Activated CD4-positive, alpha-beta T cell treated with anti-CD3 and anti-CD28 coated beads for 36 hours (primary cell): ENCODE measurements at regions of chr5 and their contacts with region 1.

Region 1: GRCh38 chr5:173972925-173973615 is 15.9 kb upstream of the C5orf47 start:
- DNase-seq: peak; percentile 87
- ATAC-seq: peak; percentile 84
- H3K4me3 Mint-ChIP-seq: peak overlapping the region; percentile 70
- H3K27ac Mint-ChIP-seq: peak overlapping the region; percentile 29
- H3K4me1 Mint-ChIP-seq: peaks cover 8% of the 10 kb centered on the region
- H3K27me3 Mint-ChIP-seq: peaks cover 5% of the 10 kb centered on the region

Region 2: DNA sequence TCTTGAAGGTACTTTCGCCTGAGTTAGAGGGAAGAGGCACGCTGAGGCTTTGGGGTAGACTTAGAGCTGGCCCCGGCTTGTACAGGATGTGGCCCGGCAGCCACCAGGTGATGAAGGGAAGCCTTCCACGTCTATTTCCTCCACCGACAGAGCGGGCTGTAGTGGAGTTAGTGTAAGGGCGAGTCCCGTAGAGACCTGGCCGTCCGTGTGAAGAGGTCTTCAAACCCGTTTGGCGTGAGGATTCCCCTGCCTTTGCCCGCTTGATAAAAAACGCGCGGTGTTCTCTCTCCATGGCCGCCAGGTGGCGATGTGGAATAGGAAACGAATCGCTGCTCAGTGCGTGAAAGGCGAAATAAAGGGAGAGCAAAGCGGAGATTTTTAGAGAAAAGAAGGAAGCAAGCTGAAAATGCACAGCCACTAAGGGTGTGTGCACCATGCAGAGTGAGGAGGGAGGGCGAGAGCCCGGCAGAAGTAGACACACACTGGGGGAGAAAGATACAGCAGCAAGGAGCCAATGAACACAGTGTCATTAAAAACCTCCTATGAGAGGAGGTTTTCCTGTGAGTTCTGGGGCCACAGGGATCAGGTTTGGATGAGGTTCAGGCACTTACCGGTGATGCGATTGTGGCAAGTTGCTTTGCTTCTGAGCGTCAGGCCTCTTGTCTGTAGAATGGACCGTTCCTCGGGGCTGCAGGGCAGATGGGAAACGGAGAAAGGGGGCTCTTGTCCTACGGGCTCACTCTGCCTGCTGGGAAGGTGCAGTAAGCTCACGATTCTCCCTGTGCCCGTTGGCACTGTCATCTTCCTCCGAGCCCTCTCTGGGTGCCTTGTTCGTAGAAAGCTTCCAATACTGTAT is 679.0 kb before region 1 on chr5:
- CTCF ChIA-PET with region 1: no interaction called
- POLR2A ChIA-PET with region 1: no interaction called
- intact Hi-C with region 1: loop called in 1 of 2 experiments (anchors 1 kb)
- DNase-seq: peak; percentile 87
- ATAC-seq: peak; percentile 85
- H3K4me3 Mint-ChIP-seq: peak overlapping the region; percentile 16
- H3K27ac Mint-ChIP-seq: no peak overlapping the region
- H3K4me1 Mint-ChIP-seq: peaks cover 12% of the 10 kb centered on the region
- H3K27me3 Mint-ChIP-seq: peaks cover 32% of the 10 kb centered on the region

Region 3: DNA sequence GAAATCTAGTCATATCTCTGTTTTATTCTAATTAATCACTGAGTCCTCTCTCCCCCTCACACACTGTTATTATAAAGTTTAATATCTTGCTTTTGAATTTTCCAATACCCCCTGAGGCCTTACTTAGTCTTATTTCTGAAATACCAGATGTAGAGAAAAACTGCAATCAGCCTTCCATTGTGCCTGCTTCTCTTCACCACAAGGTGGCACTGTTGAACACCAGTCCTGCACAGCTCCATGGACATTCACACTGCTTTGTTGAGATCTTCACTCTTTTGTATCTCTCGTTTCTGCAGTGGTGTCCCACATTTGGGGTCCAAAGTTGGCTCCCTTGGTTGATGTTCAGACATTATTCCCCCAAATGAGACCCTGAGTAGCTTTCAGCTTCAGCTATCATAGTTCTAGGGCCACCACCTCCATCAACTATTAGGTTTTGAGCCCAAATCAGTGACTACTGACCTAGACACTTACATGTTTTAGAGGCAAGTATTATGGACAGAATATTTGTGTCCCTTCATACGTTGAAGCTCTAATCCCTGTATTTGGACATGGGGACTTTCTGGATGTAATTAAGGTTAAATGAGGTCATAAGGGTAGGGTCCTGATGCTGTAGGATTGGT is 380.9 kb before region 1 on chr5:
- CTCF ChIA-PET with region 1: interaction called, 10 read pairs
- POLR2A ChIA-PET with region 1: no interaction called
- intact Hi-C with region 1: loop called in 1 of 2 experiments (anchors 1 kb)
- DNase-seq: peak; percentile 41
- ATAC-seq: no peak
- H3K4me3 Mint-ChIP-seq: no peak overlapping the region
- H3K27ac Mint-ChIP-seq: no peak overlapping the region
- H3K4me1 Mint-ChIP-seq: no peaks in the 10 kb centered on the region
- H3K27me3 Mint-ChIP-seq: no peaks in the 10 kb centered on the region

Region 4: DNA sequence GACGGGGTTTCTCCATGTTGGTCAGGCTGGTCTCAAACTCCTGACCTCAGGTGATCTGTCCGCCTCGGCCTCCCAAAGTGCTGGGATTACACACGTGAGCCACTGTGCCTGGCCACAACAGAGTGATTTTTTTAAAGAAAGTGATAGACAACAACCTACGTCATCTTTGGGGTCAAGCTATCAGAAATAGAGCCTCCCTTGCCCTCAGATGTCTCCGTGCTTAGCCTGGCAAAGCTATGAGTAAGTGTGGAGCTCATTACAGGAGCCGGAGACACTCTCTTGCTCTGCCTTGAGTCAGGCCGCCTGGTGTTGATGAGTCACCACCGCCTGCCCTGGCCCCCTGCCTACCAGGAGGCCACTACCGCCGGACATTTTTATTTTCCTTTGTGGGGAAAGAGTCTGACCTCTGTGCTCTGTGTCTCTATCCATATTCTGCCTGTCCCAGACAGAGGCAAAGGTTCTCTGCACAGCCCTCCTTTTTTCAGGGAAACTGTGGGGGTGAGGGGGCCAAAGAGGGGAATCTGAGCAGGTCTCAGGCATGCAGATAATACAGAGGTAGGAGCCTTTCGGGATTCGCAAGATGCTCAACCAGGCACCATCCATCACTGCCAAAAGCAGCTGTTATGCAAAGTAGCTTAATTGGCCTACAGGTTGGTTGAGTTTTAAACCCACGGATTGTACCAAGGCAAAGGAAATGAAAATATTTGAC is 208.6 kb before region 1 on chr5:
- CTCF ChIA-PET with region 1: no interaction called
- POLR2A ChIA-PET with region 1: no interaction called
- intact Hi-C with region 1: loop called in 1 of 2 experiments (anchors 10 kb)
- DNase-seq: no peak
- ATAC-seq: no peak
- H3K4me3 Mint-ChIP-seq: no peak overlapping the region
- H3K27ac Mint-ChIP-seq: no peak overlapping the region
- H3K4me1 Mint-ChIP-seq: no peaks in the 10 kb centered on the region
- H3K27me3 Mint-ChIP-seq: no peaks in the 10 kb centered on the region

Region 5: DNA sequence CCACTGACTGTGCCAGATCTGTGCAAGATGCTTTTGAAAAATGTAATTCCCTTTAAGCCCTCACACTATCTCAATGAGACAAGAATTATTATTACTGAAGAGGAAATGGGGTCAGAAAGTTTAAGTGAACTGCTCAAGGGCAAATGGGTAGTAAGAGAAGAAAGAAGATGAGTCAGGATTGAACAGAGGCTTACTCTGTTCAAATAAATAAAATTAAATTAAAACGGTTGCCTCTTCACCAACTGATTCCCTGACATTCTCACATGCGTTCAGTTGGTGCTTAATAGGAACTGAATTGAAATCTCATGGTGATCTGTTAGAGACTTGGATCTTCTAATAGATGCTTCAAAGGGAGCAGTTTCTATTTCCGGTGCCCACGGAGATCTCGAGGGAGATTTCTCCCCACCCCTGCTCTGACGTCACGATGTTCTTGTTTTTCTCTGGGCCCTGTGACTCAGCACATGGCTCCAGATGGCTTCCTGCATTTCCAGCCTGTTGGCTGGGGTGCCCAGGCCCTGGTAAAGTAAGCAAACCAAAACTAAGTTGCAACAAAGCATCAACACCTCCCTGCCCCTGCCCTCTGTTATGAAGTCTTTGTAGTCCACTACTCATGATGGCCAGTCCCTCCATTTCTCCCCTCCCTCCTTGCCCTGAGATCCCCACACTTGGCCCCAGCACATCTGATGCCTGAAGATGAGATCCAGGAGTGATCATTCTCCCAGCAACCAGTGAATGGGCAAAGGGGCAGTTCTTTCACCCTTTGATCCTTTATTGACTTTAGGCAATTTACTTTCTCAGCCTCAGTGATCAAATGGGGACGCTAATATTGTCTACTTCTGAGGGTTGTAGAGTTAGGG is 191.0 kb before region 1 on chr5:
- CTCF ChIA-PET with region 1: no interaction called
- POLR2A ChIA-PET with region 1: no interaction called
- intact Hi-C with region 1: loop called in 1 of 2 experiments (anchors 10 kb)
- DNase-seq: peak; percentile 74
- ATAC-seq: peak; percentile 70
- H3K4me3 Mint-ChIP-seq: peak overlapping the region; percentile 22
- H3K27ac Mint-ChIP-seq: peak overlapping the region; percentile 89
- H3K4me1 Mint-ChIP-seq: peaks cover 29% of the 10 kb centered on the region
- H3K27me3 Mint-ChIP-seq: no peaks in the 10 kb centered on the region

Region 6: DNA sequence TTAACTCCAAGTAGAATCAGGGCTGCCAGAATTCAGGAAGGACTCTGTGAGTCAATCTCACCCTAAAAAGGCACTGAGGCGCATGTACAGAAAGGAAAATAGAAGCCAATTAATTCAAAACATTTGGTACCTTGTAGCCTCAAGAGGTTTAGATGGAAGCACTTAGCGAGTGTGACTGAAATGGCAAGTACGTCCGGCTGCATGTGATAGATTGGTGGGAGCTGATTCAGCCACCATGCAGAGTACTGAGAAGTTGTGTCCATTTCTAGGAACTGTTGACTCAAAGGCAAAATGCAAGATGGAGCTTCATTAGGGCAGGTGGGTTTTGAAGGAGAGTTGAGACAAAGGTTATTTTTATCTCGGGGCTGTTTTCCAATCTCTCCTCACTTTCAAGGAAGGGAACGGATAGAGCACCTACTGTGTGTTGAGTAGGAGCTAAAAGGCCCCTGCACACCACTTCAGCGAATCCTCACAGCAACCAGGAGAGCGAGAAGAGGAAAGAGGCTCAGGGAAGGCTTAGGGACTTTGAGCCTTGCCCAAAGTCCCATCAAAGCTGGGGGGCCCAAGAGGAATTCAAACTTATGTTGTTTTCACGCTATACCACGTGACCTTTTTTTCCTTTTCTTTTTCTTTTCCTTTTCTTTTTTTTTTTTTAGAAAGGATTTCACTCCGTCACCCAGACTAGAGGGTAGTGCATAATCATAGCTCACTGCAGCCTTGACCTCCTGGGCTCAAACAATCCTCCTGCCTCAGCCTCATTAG is 119.5 kb before region 1 on chr5:
- CTCF ChIA-PET with region 1: no interaction called
- POLR2A ChIA-PET with region 1: no interaction called
- intact Hi-C with region 1: no loop called
- DNase-seq: peak; percentile 6
- ATAC-seq: no peak
- H3K4me3 Mint-ChIP-seq: no peak overlapping the region
- H3K27ac Mint-ChIP-seq: no peak overlapping the region
- H3K4me1 Mint-ChIP-seq: peaks cover 5% of the 10 kb centered on the region
- H3K27me3 Mint-ChIP-seq: peaks cover 7% of the 10 kb centered on the region

Region 7: DNA sequence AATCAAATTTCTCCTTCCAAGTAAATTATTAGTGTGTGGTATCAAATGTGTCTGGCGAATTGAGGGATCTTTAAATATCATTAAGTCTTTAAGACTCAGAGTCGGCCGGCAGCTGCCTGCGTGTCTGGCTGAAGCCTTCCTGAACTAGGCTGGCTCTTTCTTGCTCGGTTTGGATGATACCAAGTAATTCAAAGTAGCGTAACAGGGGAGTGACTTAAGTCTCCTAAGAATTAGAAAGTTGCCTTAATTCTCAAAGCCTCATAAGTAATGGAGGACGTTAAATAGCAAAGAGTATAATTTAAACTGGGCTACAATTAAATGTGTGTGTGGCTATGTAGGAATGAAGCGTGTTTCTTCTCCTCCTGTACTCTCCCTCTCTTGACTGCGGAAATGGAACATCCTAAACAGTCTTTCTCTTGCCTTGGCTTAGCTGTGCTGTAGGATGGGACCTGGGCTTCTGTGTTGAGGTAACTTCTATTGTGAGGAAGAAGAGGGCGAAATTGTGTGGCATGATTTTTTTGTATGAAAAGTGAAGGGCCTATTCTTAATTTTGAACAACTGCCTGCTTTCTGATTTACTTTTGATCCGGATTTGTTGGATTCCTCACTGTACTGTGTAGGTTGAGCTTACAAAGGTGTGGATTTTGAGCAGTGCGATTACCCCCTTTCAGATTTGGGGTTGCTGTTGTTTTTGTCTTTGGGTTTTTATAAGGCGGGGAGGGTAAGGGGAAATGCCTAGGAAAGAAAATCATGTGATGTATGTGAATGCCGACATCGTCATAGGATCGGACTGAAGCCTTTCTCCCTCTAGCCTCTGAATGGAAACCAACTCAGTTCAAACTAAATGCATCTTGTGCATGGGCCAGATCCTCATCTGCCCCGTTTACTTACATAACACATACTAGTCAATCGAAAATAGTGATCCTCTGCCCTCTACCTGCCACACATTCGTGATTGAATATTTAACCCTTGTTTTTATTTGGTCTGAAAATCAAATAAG is 55.0 kb before region 1 on chr5:
- CTCF ChIA-PET with region 1: interaction called, 4 read pairs
- POLR2A ChIA-PET with region 1: no interaction called
- intact Hi-C with region 1: loop called in 1 of 2 experiments (anchors 2 kb)
- DNase-seq: peak; percentile 73
- ATAC-seq: peak; percentile 96
- H3K4me3 Mint-ChIP-seq: no peak overlapping the region
- H3K27ac Mint-ChIP-seq: no peak overlapping the region
- H3K4me1 Mint-ChIP-seq: peaks cover 10% of the 10 kb centered on the region
- H3K27me3 Mint-ChIP-seq: no peaks in the 10 kb centered on the region